Ovary (tissue), 10 donors: ENCODE measurements at regions of chr1 and their contacts with region 1.

Region 1: GRCh38 chr1:15028102-15028501 is 125.4 kb upstream of the TMEM51 start:
- DNase-seq: no peak
- H3K4me3 ChIP-seq: no peak overlapping the region
- H3K27ac ChIP-seq: no peak overlapping the region
- H3K4me1 ChIP-seq: peaks cover 1% of the 10 kb centered on the region
- H3K27me3 ChIP-seq: no peaks in the 10 kb centered on the region
- CTCF ChIP-seq: no peak
- EP300 ChIP-seq: no peak
- POLR2A ChIP-seq: no peak

Region 2: GRCh38 chr1:14913482-14914177 is 114.5 kb before region 1 on chr1:
- intact Hi-C with region 1: loop called in 1 of 4 experiments (anchors 5 kb)
- DNase-seq: no peak
- H3K4me3 ChIP-seq: no peak overlapping the region
- H3K27ac ChIP-seq: no peak overlapping the region
- H3K4me1 ChIP-seq: peaks cover 15% of the 10 kb centered on the region
- H3K27me3 ChIP-seq: no peaks in the 10 kb centered on the region
- CTCF ChIP-seq: no peak
- EP300 ChIP-seq: no peak
- POLR2A ChIP-seq: no peak

Region 3: GRCh38 chr1:14923727-14924452 is 104.2 kb before region 1 on chr1:
- intact Hi-C with region 1: loop called in 3 of 4 experiments (anchors 2 to 10 kb)
- DNase-seq: peak; percentile 79 to 88 (median 80)
- H3K4me3 ChIP-seq: peak overlapping the region; percentile 67
- H3K27ac ChIP-seq: peak overlapping the region; percentile 64 to 94
- H3K4me1 ChIP-seq: peaks cover 19% of the 10 kb centered on the region
- H3K27me3 ChIP-seq: no peaks in the 10 kb centered on the region
- CTCF ChIP-seq: no peak
- EP300 ChIP-seq: no peak
- POLR2A ChIP-seq: no peak

Region 4: GRCh38 chr1:15062479-15063099 is 34.5 kb after region 1 on chr1:
- intact Hi-C with region 1: no loop called
- DNase-seq: no peak
- H3K4me3 ChIP-seq: no peak overlapping the region
- H3K27ac ChIP-seq: no peak overlapping the region
- H3K4me1 ChIP-seq: no peaks in the 10 kb centered on the region
- H3K27me3 ChIP-seq: no peaks in the 10 kb centered on the region
- CTCF ChIP-seq: no peak
- EP300 ChIP-seq: no peak
- POLR2A ChIP-seq: no peak

Region 5: GRCh38 chr1:15311880-15312279 is 283.8 kb after region 1 on chr1:
- intact Hi-C with region 1: no loop called
- DNase-seq: no peak
- H3K4me3 ChIP-seq: no peak overlapping the region
- H3K27ac ChIP-seq: no peak overlapping the region
- H3K4me1 ChIP-seq: no peaks in the 10 kb centered on the region
- H3K27me3 ChIP-seq: no peaks in the 10 kb centered on the region
- CTCF ChIP-seq: no peak
- EP300 ChIP-seq: no peak
- POLR2A ChIP-seq: no peak